ENCODE measurements at regions of chr2 and their contacts with region 1.

Region 1: GRCh38 chr2:38274286-38275276 is 102.5 kb downstream of the ATL2 start:
- DNase-seq: no peak
- H3K4me3 Mint-ChIP-seq: no peak overlapping the region
- H3K27ac Mint-ChIP-seq: no peak overlapping the region
- H3K4me1 Mint-ChIP-seq: peaks cover 12% of the 10 kb centered on the region
- H3K27me3 Mint-ChIP-seq: peaks cover 5% of the 10 kb centered on the region

Region 2: DNA sequence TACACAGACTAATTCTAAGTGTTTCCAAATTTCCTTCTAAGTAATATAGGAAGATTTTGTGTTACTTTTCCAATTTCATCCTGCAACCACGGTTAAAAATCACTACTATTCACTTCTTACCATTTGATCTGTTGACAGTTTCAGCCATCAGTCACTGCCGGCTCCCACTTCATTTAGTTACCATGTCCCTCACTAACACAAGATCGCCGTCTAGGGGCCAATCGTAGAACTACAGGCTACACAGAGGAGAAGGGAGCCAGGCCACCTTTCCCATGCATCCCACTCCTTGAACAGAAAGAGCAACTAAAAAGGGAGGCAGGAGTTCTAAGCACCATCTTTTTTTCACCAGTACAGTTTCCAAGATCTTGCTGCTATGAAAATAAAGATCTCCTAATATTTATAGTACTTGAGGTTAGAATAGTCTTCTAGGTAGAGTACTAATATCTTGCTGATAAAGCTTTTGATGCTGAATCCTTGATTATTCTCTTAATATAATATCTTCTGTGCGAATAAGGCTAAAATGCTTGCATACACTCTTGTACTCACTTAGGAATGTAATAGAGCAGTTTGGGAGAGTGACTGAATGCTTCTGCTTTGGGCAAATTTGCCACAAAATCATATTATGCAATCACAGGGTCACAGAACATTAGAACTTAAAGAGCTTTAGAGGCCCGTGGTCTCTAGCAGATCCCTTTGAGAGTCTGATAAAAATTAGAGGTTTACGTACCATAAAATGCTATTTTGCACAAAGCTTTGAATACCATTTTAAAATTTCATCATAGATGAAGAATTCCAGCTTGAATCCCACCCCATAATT is 159.2 kb before region 1 on chr2:
- intact Hi-C with region 1: loop called (anchors 5 kb)
- DNase-seq: peak; percentile 59
- H3K4me3 Mint-ChIP-seq: no peak overlapping the region
- H3K27ac Mint-ChIP-seq: no peak overlapping the region
- H3K4me1 Mint-ChIP-seq: peaks cover 10% of the 10 kb centered on the region
- H3K27me3 Mint-ChIP-seq: peaks cover 23% of the 10 kb centered on the region

Region 3: GRCh38 chr2:38233231-38233983 is 41.2 kb before region 1 on chr2:
- intact Hi-C with region 1: no loop called
- DNase-seq: no peak
- H3K4me3 Mint-ChIP-seq: no peak overlapping the region
- H3K27ac Mint-ChIP-seq: no peak overlapping the region
- H3K4me1 Mint-ChIP-seq: no peaks in the 10 kb centered on the region
- H3K27me3 Mint-ChIP-seq: peaks cover 32% of the 10 kb centered on the region

Region 4: GRCh38 chr2:38301340-38301968 is 26.9 kb after region 1 on chr2:
- intact Hi-C with region 1: no loop called
- DNase-seq: no peak
- H3K4me3 Mint-ChIP-seq: no peak overlapping the region
- H3K27ac Mint-ChIP-seq: peak overlapping the region; percentile 39
- H3K4me1 Mint-ChIP-seq: peaks cover 35% of the 10 kb centered on the region
- H3K27me3 Mint-ChIP-seq: no peaks in the 10 kb centered on the region

Region 5: DNA sequence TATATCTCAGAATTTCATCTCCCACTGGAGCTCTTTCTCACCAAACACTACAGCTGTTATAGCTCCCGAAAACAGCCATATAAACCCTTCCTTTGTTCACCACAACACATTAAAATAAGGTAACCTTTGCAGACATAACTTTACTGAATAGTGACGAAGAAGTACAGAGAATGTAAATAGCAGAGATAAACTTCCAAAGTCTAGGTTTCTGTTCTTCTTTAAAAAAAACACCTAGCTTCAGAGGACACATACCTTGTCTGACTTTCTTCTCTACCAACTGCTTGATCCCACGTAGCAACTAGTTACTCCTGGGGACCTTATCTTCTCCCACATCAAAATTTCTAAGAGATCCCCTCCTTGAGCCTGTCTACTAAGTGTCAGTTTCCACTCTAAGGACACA is 70.2 kb after region 1 on chr2:
- intact Hi-C with region 1: no loop called
- DNase-seq: no peak
- H3K4me3 Mint-ChIP-seq: no peak overlapping the region
- H3K27ac Mint-ChIP-seq: no peak overlapping the region
- H3K4me1 Mint-ChIP-seq: peaks cover 2% of the 10 kb centered on the region
- H3K27me3 Mint-ChIP-seq: no peaks in the 10 kb centered on the region

Region 6: GRCh38 chr2:39135690-39136259 is 861.2 kb after region 1 on chr2:
- intact Hi-C with region 1: no loop called
- DNase-seq: no peak
- H3K4me3 Mint-ChIP-seq: peak overlapping the region; percentile 28
- H3K27ac Mint-ChIP-seq: peak overlapping the region; percentile 78
- H3K4me1 Mint-ChIP-seq: peaks cover 67% of the 10 kb centered on the region
- H3K27me3 Mint-ChIP-seq: no peaks in the 10 kb centered on the region

Measured in activated T-helper 2 cell treated with anti-CD3 and anti-CD28 coated beads, Interferon-gamma antibody, Interleukin-2, Interleukin-4, amounts not matched to agents 10 μg/mL and 5 μg/mL and 100 μg/mL, durations not matched to agents 14 hours and 24 hours and 36 hours (primary cell).